Head of caudate nucleus (tissue), 42 donors: ENCODE measurements at regions of chr1 and their contacts with region 1.

Region 1: GRCh38 chr1:241895013-241895412 is 47.0 kb downstream of the EXO1 start:
- DNase-seq: no peak

Region 2: GRCh38 chr1:241998412-241998921 is 103.5 kb after region 1 on chr1:
- intact Hi-C with region 1: loop called (anchors 10 kb)
- DNase-seq: peak in 41 of 42 donors; percentile 4 to 78 (median 46)